Activated B cell treated with CpG ODN at 0.5 μM for 24 hours (primary cell): ENCODE measurements at regions of chr1 and their contacts with region 1.

Region 1: GRCh38 chr1:45543581-45544417 is 6.8 kb upstream of the AKR1A1 start:
- DNase-seq: peak; percentile 55
- ATAC-seq: peak; percentile 84
- H3K4me3 Mint-ChIP-seq: peak overlapping the region; percentile 76
- H3K27ac Mint-ChIP-seq: peak overlapping the region; percentile 94
- H3K4me1 Mint-ChIP-seq: peaks cover 56% of the 10 kb centered on the region
- H3K27me3 Mint-ChIP-seq: no peaks in the 10 kb centered on the region
- CTCF ChIP-seq: no peak

Region 2: DNA sequence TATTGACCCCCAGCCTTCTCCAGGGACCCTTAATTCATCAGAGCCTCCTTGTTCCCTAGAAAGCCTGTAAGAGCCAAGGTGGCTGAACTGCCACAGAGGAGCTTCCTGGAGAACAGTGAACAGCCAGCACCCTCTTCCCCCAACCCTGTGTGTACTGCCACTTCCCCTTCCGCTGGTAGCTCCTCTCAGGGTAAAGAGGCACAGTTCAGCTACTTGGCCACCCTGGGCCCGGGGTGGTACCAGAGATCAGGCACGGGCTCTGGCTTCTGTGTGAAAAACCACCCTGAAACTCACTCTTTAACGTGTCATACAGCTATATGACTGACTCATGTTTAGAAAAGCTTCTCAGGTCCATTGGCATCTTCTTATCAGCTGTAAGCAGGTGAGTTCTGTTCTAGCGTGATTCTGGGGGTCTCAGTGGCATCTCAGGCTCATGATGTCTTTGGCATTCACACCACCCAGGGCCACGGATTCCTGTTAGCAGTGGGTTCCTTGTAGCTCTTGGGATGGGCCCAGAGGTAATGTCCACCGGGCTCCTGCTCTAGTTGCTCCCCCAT is 846.9 kb before region 1 on chr1:
- CTCF ChIA-PET with region 1: no interaction called
- POLR2A ChIA-PET with region 1: interaction called, 11 read pairs
- intact Hi-C with region 1: no loop called
- DNase-seq: peak; percentile 30
- ATAC-seq: peak; percentile 70
- H3K4me3 Mint-ChIP-seq: peak overlapping the region; percentile 55
- H3K27ac Mint-ChIP-seq: peak overlapping the region; percentile 84
- H3K4me1 Mint-ChIP-seq: peaks cover 52% of the 10 kb centered on the region
- H3K27me3 Mint-ChIP-seq: no peaks in the 10 kb centered on the region
- CTCF ChIP-seq: no peak

Region 3: DNA sequence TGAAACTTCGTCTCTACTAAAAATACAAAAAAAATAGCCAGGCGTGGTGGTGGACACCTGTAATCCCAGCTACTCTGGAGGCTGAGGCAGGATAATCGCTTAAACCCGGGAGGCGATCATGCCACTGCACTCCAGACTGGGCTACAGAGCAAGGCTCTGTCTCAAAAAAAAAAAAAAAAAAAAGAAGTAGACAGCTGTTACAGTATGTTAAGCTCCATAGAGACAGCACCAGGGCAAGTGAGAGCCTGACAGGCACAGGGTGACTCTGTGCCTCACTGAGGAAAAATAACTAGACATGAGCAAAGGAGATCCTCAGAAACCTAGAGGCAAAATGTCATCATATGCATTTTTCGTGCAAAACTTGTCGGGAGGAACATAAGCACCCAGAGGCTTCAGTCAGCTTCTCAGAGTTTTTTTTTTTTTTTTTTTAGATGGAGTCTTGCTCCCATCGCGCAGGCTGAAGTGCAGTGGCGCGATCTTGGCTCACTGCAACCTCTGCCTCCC is 13.1 kb before region 1 on chr1:
- CTCF ChIA-PET with region 1: no interaction called
- POLR2A ChIA-PET with region 1: interaction called, 13 read pairs
- intact Hi-C with region 1: no loop called
- DNase-seq: no peak
- ATAC-seq: no peak
- H3K4me3 Mint-ChIP-seq: no peak overlapping the region
- H3K27ac Mint-ChIP-seq: no peak overlapping the region
- H3K4me1 Mint-ChIP-seq: no peaks in the 10 kb centered on the region
- H3K27me3 Mint-ChIP-seq: no peaks in the 10 kb centered on the region
- CTCF ChIP-seq: no peak

Region 4: DNA sequence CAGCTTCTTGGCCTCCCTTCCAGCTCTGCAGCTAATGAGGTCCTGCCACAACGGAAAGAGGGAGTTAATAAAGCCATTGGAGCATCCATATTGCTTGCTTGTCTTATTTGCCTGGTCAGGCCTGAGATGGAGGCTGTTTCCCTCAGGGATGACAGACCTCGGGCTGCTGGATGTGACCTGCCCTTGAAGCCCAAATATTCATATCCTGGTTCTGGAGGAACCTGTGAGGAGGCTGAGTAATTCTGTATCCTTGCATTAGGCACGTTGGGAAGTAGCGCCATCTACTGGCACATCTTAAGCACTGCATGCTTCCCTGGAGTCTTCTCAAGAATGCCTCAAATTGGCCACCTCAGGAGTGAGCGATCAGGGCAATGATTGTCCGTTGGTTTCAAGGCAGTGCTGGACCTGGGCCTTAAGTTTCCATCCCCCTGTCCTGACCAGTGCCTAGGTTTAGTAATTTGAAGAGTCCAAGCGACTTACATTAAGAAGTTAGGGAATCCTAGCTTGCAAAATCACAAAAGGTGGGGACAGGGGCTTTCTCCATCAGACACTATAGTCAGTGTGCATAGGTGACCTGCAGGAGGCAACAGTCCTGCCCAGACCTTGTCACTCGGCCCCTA is 26.3 kb after region 1 on chr1:
- CTCF ChIA-PET with region 1: interaction called, 23 read pairs
- POLR2A ChIA-PET with region 1: interaction called, 9 read pairs
- intact Hi-C with region 1: no loop called
- DNase-seq: peak; percentile 48
- ATAC-seq: peak; percentile 98
- H3K4me3 Mint-ChIP-seq: no peak overlapping the region
- H3K27ac Mint-ChIP-seq: no peak overlapping the region
- H3K4me1 Mint-ChIP-seq: no peaks in the 10 kb centered on the region
- H3K27me3 Mint-ChIP-seq: no peaks in the 10 kb centered on the region
- CTCF ChIP-seq: peak; percentile 17